GM12878 (cell line): ENCODE measurements at regions of chr6 and their contacts with region 1.

Region 1: GRCh38 chr6:2862712-2863181 is 21.1 kb upstream of the SERPINB1 start:
- DNase-seq: peak; percentile 93
- ATAC-seq: peak; percentile 67
- H3K4me3 ChIP-seq: no peak overlapping the region
- H3K27ac ChIP-seq: peak overlapping the region; percentile 86
- H3K4me1 ChIP-seq: peaks cover 67% of the 10 kb centered on the region
- H3K27me3 ChIP-seq: no peaks in the 10 kb centered on the region
- CTCF ChIP-seq: no peak
- EP300 ChIP-seq: peak; percentile 91 to 98
- POLR2A ChIP-seq: no peak
- RAD21 ChIP-seq: no peak

Region 2: GRCh38 chr6:2196079-2196679 is 666.6 kb before region 1 on chr6:
- CTCF ChIA-PET with region 1: no interaction called
- POLR2A ChIA-PET with region 1: no interaction called
- RAD21 ChIA-PET with region 1: no interaction called
- SMC1A ChIA-PET with region 1: no interaction called
- in situ Hi-C with region 1: no loop called
- intact Hi-C with region 1: no loop called
- DNase-seq: peak; percentile 13
- ATAC-seq: peak; percentile 87
- H3K4me3 ChIP-seq: no peak overlapping the region
- H3K27ac ChIP-seq: no peak overlapping the region
- H3K4me1 ChIP-seq: no peaks in the 10 kb centered on the region
- H3K27me3 ChIP-seq: no peaks in the 10 kb centered on the region
- CTCF ChIP-seq: peak; percentile 67 to 79 (median 77)
- EP300 ChIP-seq: no peak
- POLR2A ChIP-seq: no peak
- RAD21 ChIP-seq: peak; percentile 88

Region 3: GRCh38 chr6:2706558-2706957 is 156.2 kb before region 1 on chr6:
- CTCF ChIA-PET with region 1: no interaction called
- POLR2A ChIA-PET with region 1: no interaction called
- RAD21 ChIA-PET with region 1: no interaction called
- SMC1A ChIA-PET with region 1: no interaction called
- in situ Hi-C with region 1: no loop called
- intact Hi-C with region 1: no loop called
- DNase-seq: no peak
- ATAC-seq: no peak
- H3K4me3 ChIP-seq: no peak overlapping the region
- H3K27ac ChIP-seq: no peak overlapping the region
- H3K4me1 ChIP-seq: no peaks in the 10 kb centered on the region
- H3K27me3 ChIP-seq: peaks cover 0 to 5% of the 10 kb centered on the region in 2 experiments; a peak in 1 of 4 replicates
- CTCF ChIP-seq: no peak
- EP300 ChIP-seq: no peak
- POLR2A ChIP-seq: no peak
- RAD21 ChIP-seq: no peak

Region 4: DNA sequence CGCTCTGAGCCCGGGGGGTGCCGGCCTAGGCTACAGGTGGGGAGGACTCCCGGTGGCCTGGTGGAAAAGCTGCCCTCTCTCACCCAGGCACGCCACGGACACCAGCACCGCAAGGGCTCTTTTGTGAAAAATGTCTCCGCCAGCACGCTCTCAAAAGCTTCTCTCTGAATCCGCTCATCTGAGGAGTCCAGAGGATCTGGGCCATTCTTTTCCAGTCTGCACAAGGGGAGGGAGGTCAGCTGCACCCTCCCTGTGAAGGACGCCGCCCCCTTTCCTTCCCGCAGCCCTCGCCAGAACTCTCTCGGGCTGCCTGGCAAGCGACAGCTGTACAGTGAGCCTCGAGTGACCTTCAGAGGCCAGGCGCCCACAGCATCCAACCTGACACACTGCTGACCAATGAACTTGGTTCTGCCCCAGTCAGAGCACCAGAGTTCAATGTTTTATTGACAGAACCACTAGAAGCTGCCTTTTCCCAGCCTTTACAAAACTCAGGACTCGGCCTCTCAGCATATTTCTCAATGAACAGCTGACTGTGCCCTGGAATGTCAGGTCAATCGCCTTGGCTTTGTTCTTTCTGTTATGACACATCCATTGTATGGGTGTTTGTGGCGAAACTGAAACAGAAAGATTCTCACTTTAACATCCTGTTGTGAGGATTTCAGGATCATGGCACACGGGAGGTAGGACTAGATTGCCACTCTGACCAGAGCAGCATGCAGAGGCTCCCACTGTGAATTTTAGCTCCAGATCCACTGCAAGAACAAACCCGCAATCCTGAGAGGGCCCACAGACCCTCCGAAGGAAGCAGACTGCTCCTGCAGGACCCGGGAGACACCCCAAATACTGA is 13.7 kb after region 1 on chr6:
- CTCF ChIA-PET with region 1: interaction called, 8 read pairs
- POLR2A ChIA-PET with region 1: interaction called, 108 read pairs
- RAD21 ChIA-PET with region 1: interaction called, 39 read pairs
- SMC1A ChIA-PET with region 1: interaction called, 28 read pairs
- in situ Hi-C with region 1: no loop called
- intact Hi-C with region 1: loop called (anchors 2 kb)
- DNase-seq: no peak
- ATAC-seq: peak; percentile 51
- H3K4me3 ChIP-seq: 0 out of 2 replicates have a peak overlapping the region, but pooled peaks have one; percentile 18
- H3K27ac ChIP-seq: no peak overlapping the region
- H3K4me1 ChIP-seq: peaks cover 36% of the 10 kb centered on the region
- H3K27me3 ChIP-seq: no peaks in the 10 kb centered on the region
- CTCF ChIP-seq: no peak
- EP300 ChIP-seq: no peak
- POLR2A ChIP-seq: no peak; the same call in 1 of the 2 replicates
- RAD21 ChIP-seq: no peak

Region 5: GRCh38 chr6:2900821-2901644 is 38.3 kb after region 1 on chr6:
- CTCF ChIA-PET with region 1: interaction called, 36 read pairs
- POLR2A ChIA-PET with region 1: interaction called, 126 read pairs
- RAD21 ChIA-PET with region 1: interaction called, 64 read pairs
- SMC1A ChIA-PET with region 1: interaction called, 136 read pairs
- in situ Hi-C with region 1: no loop called
- intact Hi-C with region 1: no loop called
- DNase-seq: no peak
- ATAC-seq: peak; percentile 8
- H3K4me3 ChIP-seq: peak overlapping the region; percentile 57
- H3K27ac ChIP-seq: no peak overlapping the region
- H3K4me1 ChIP-seq: peaks cover 29% of the 10 kb centered on the region
- H3K27me3 ChIP-seq: no peaks in the 10 kb centered on the region; a peak in 1 of 4 replicates
- CTCF ChIP-seq: no peak
- EP300 ChIP-seq: no peak
- POLR2A ChIP-seq: 0 out of 2 replicates have a peak, but pooled peaks have one; percentile 1
- RAD21 ChIP-seq: no peak

Region 6: GRCh38 chr6:2940010-2940850 is 77.5 kb after region 1 on chr6:
- CTCF ChIA-PET with region 1: interaction called, 3 read pairs
- POLR2A ChIA-PET with region 1: no interaction called
- RAD21 ChIA-PET with region 1: interaction called, 6 read pairs
- SMC1A ChIA-PET with region 1: interaction called, 8 read pairs
- in situ Hi-C with region 1: loop called (anchors 5 kb)
- intact Hi-C with region 1: loop called (anchors 1 kb)
- DNase-seq: peak; percentile 99
- ATAC-seq: peak; percentile 97
- H3K4me3 ChIP-seq: no peak overlapping the region
- H3K27ac ChIP-seq: peak overlapping the region; percentile 17; the same call in 1 of the 2 replicates
- H3K4me1 ChIP-seq: peaks cover 36% of the 10 kb centered on the region
- H3K27me3 ChIP-seq: peaks cover 0 to 6% of the 10 kb centered on the region in 2 experiments
- CTCF ChIP-seq: no peak
- EP300 ChIP-seq: peak; percentile 64 to 93
- POLR2A ChIP-seq: peak; percentile 72
- RAD21 ChIP-seq: no peak